ENCODE measurements at regions of chr7 and their contacts with region 1.

Region 1: DNA sequence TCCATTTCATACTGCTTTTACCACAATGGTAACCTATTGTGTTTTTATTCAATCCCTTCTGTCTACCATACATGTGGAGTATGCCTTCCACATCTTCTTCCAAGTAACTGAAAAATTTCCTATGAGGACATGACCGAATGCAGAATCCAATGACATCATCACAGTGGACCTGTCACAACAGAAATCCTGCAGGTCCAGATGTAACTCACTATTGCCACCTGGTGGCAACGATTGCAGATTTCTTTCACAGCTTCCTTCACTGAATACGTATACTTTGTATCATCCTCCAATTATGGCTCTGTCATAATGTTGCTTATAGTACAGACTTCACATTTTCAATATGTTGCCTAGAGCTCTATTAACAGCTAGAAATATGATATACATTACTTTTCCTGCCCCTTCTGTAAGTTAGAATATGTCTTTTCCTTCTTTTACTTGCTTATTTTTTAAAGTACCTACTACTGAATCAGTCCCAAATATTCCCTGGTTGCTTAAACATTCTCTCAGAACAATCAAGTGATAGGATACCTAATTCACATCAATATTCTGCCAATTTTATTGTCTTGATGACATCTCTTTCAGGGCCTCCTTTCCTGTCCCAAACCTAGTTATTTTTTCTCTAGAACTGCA is 45.4 kb downstream of the SLC13A1 start:
- DNase-seq: no peak
- ATAC-seq: peak; percentile 82

Region 2: DNA sequence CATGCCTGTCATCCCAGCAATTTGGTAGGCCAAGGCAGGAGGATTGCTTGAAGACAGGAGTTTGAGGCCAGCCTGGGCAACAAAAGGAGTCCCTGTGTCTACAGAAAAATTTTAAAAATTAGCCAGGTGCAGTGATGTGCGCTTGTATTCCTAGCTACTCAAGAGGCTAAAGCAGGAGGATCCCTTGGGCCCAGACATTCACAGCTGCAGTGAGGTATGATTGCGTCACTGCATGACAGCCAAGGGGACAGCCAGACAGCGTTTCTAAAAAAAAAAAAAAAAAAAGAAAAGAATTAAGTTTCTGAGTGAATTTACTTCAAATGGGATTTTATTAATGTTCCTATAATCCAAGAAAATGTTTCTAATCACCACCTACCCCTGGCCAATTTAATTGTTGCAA is 364.2 kb before region 1 on chr7:
- intact Hi-C with region 1: loop called (anchors 10 kb)
- DNase-seq: no peak
- ATAC-seq: peak; percentile 40

Region 3: DNA sequence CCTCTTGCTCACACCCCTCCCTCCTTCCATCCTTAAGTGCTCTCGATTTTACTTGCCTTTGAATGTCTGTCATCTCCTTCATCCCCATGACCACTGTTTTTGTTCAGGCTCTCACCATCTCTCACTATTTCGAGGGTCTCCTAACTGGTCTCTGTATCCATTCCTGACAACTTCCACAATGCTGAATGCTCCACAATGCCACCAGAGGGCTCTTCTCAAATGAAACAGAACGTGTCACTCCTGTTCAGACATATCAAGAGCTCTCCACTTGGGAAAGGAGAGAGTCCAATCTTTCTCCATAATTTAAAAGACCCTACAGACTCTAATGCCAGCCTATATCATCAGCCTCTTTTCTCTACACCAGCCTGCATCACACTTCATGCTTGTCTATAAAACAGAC is 54.4 kb after region 1 on chr7:
- intact Hi-C with region 1: no loop called
- DNase-seq: no peak
- ATAC-seq: no peak